IMR-90 (cell line): ENCODE measurements at regions of chr17 and their contacts with region 1.

Region 1: DNA sequence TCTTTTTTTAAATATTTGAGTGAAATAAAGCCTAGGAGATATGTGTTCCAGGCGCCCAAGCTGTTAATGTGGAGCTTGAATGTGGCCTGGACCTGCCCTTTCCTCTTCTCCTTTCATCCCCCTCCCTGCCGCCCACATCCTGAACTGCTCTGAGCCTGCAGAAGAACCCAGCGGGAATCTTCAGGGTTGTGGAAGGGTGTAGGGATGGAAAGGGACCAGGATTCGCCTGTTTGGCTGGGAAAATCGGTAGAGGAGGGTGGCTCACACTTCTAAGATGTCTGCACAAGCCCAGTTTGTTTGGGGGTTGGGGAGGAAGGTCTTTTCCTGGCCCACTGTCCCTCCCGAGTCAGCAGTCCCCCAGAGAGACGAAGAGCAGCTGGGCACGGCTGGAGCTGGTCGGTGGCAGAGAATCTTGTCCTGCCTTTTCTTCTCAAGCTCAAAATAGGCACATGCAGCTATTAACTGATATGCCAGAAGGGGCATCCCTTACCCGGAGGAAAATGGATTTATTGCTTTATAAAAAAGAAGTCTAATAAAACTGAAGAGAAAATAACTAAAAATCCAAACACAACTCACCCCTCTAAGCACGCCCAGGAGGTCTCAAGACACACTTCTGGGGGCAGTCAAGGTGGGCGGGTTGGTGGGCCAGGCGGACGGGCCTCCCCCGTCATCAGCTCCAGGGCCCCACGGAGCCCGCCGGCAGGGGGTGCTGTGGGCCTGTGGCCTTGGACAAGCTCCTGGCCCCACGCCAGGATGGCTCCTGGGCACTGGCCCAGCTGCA is 11.5 kb upstream of the PITPNA start:
- DNase-seq: peak; percentile 66
- ATAC-seq: peak; percentile 58
- H3K4me3 ChIP-seq: no peak overlapping the region
- H3K27ac ChIP-seq: no peak overlapping the region; the same call in 1 of the 2 replicates
- H3K4me1 ChIP-seq: peaks cover 15% of the 10 kb centered on the region
- H3K27me3 ChIP-seq: no peaks in the 10 kb centered on the region
- CTCF ChIP-seq: peak; percentile 96
- POLR2A ChIP-seq: no peak
- RAD21 ChIP-seq: peak; percentile 91

Region 2: DNA sequence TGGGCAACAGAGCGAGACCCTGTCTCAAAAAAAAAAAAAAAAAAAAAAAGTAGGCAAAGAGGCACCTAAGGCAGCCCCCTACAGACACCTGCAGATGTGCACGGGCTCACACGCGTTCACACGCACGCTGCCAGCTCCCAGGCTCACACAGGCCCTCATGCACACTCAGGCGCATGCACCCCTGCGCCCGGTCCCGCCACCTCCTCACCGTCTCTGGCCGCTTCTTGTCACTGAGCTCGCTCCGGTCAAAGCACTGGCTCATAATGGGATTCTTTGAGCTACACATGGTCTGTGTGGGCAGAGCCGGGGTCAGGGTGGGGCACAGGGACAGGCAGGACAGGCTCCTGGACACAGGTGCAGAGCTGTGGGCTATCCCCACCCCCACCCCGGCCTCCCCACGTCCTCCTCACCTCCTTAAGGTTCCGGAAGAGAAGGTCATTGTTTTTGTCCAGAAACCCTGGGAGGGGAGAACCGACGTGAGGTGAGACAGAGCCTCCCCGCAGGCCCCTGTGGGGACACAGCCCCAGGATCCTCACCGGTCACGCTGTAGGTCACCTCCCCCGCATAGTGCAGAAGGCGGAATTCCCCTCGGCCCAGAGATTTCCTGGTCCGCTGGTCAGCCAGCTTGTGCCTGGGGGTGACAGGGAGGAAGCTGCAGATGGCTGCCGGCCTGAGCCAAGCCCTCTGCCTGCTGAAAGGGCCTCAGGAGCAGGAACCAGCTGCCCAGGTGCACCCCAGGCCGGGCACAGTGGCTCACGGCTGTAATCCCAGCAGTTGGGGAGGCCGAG is 99.5 kb before region 1 on chr17:
- CTCF ChIA-PET with region 1: no interaction called
- POLR2A ChIA-PET with region 1: no interaction called
- dilution Hi-C with region 1: no loop called
- in situ Hi-C with region 1: no loop called
- intact Hi-C with region 1: no loop called
- DNase-seq: no peak
- ATAC-seq: no peak
- H3K4me3 ChIP-seq: no peak overlapping the region
- H3K27ac ChIP-seq: no peak overlapping the region
- H3K4me1 ChIP-seq: no peaks in the 10 kb centered on the region
- H3K27me3 ChIP-seq: no peaks in the 10 kb centered on the region
- CTCF ChIP-seq: no peak
- POLR2A ChIP-seq: no peak
- RAD21 ChIP-seq: no peak

Region 3: GRCh38 chr17:1628856-1629646 is 54.9 kb after region 1 on chr17:
- CTCF ChIA-PET with region 1: interaction called, 23 read pairs
- POLR2A ChIA-PET with region 1: no interaction called
- dilution Hi-C with region 1: no loop called
- in situ Hi-C with region 1: no loop called
- intact Hi-C with region 1: loop called (anchors 1 kb)
- DNase-seq: peak; percentile 87
- ATAC-seq: peak; percentile 85
- H3K4me3 ChIP-seq: peak overlapping the region; percentile 71
- H3K27ac ChIP-seq: peak overlapping the region; percentile 64
- H3K4me1 ChIP-seq: peaks cover 5% of the 10 kb centered on the region
- H3K27me3 ChIP-seq: peaks cover 11% of the 10 kb centered on the region; the same call in 1 of the 2 replicates
- CTCF ChIP-seq: peak; percentile 42; the same call in 1 of the 2 replicates
- POLR2A ChIP-seq: 0 out of 2 replicates have a peak, but pooled peaks have one; percentile 23
- RAD21 ChIP-seq: peak; percentile 41

Region 4: GRCh38 chr17:1648963-1649843 is 75.1 kb after region 1 on chr17:
- CTCF ChIA-PET with region 1: interaction called, 25 read pairs
- POLR2A ChIA-PET with region 1: no interaction called
- dilution Hi-C with region 1: no loop called
- in situ Hi-C with region 1: loop called (anchors 5 kb)
- intact Hi-C with region 1: loop called (anchors 1 kb)
- DNase-seq: peak; percentile 94
- ATAC-seq: peak; percentile 82
- H3K4me3 ChIP-seq: peak overlapping the region; percentile 83
- H3K27ac ChIP-seq: peak overlapping the region; percentile 62
- H3K4me1 ChIP-seq: peaks cover 22% of the 10 kb centered on the region
- H3K27me3 ChIP-seq: no peaks in the 10 kb centered on the region
- CTCF ChIP-seq: peak; percentile 99
- POLR2A ChIP-seq: peak; percentile 57
- RAD21 ChIP-seq: 0 out of 2 replicates have a peak, but pooled peaks have one; percentile 81

Region 5: GRCh38 chr17:1810450-1811103 is 236.5 kb after region 1 on chr17:
- CTCF ChIA-PET with region 1: no interaction called
- POLR2A ChIA-PET with region 1: no interaction called
- dilution Hi-C with region 1: no loop called
- in situ Hi-C with region 1: no loop called
- intact Hi-C with region 1: no loop called
- DNase-seq: no peak
- ATAC-seq: no peak
- H3K4me3 ChIP-seq: no peak overlapping the region
- H3K27ac ChIP-seq: no peak overlapping the region
- H3K4me1 ChIP-seq: 0 out of 2 replicates have a peak, but pooled peaks cover 2% of the 10 kb centered on the region
- H3K27me3 ChIP-seq: no peaks in the 10 kb centered on the region
- CTCF ChIP-seq: no peak
- POLR2A ChIP-seq: no peak
- RAD21 ChIP-seq: no peak